ENCODE measurements at regions of chr1 and their contacts with region 1.

Region 1: GRCh38 chr1:11838349-11839272 is 9.0 kb downstream of the NPPA start:
- DNase-seq: peak; percentile 69 to 76 (median 72)
- ATAC-seq: peak; percentile 83
- H3K4me3 ChIP-seq: no peak overlapping the region
- H3K27ac ChIP-seq: no peak overlapping the region
- H3K4me1 ChIP-seq: no peaks in the 10 kb centered on the region
- H3K27me3 ChIP-seq: no peaks in the 10 kb centered on the region
- CTCF ChIP-seq: peak; percentile 89 to 98 (median 90)
- POLR2A ChIP-seq: no peak

Region 2: GRCh38 chr1:11893907-11894251 is 55.3 kb after region 1 on chr1:
- intact Hi-C with region 1: loop called (anchors 5 kb)
- DNase-seq: peak; percentile 63 to 73 (median 68)
- ATAC-seq: peak; percentile 88
- H3K4me3 ChIP-seq: no peak overlapping the region
- H3K27ac ChIP-seq: no peak overlapping the region
- H3K4me1 ChIP-seq: no peaks in the 10 kb centered on the region
- H3K27me3 ChIP-seq: peaks cover 0 to 5% of the 10 kb centered on the region in 2 donors
- CTCF ChIP-seq: peak; percentile 80 to 90 (median 84)
- POLR2A ChIP-seq: no peak

Region 3: DNA sequence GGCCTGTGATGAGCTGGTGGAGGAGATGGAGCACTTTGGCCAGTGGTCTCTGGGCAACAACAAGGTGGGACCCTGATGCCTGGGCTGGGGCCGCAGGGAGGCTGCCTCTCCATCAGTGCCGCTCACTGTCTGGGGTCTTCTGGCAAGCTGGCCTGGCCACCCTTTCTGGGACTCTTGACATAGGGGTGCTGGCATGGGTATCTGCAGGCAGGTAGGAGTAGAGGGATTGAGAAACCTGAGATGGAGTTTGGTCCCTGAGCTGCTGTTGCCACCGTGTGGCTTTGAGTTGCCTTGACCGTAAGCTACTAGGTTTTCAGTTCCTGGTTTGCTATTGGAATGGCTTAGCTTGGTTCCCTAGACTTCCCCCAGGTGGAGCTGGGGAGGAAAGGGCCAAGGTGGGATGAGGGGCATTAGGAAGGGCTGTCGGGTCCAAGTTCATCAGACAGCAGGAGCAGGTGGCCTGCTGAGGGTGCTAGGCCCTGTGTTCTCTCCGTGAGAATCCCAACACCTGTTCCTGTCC is 128.5 kb after region 1 on chr1:
- intact Hi-C with region 1: loop called (anchors 10 kb)
- DNase-seq: peak; percentile 63 to 85 (median 77)
- ATAC-seq: peak; percentile 89
- H3K4me3 ChIP-seq: no peak overlapping the region
- H3K27ac ChIP-seq: peak overlapping the region in 2 of 4 donors; percentile 14 to 64
- H3K4me1 ChIP-seq: peaks cover 10% of the 10 kb centered on the region
- H3K27me3 ChIP-seq: no peaks in the 10 kb centered on the region
- CTCF ChIP-seq: peak; percentile 36 to 95 (median 84)
- POLR2A ChIP-seq: no peak